Activated CD4-positive, alpha-beta memory T cell treated with anti-CD3 and anti-CD28 coated beads, Interleukin-2, amount 10 ng/mL, durations not matched to agents 7 days and 5 days (primary cell): ENCODE measurements at regions of chr3 and their contacts with region 1.

Region 1: GRCh38 chr3:56291244-56291680 is 177.0 kb downstream of the ERC2 start:
- DNase-seq: peak; percentile 26
- H3K4me3 Mint-ChIP-seq: peak overlapping the region; percentile 23
- H3K27ac Mint-ChIP-seq: peak overlapping the region; percentile 69
- H3K4me1 Mint-ChIP-seq: peaks cover 43% of the 10 kb centered on the region
- H3K27me3 Mint-ChIP-seq: peaks cover 5% of the 10 kb centered on the region

Region 2: GRCh38 chr3:56303487-56303886 is 12.2 kb after region 1 on chr3:
- CTCF ChIA-PET with region 1: interaction called, 11 read pairs
- POLR2A ChIA-PET with region 1: no interaction called
- DNase-seq: peak; percentile 20
- H3K4me3 Mint-ChIP-seq: no peak overlapping the region
- H3K27ac Mint-ChIP-seq: no peak overlapping the region
- H3K4me1 Mint-ChIP-seq: peaks cover 1% of the 10 kb centered on the region
- H3K27me3 Mint-ChIP-seq: peaks cover 2% of the 10 kb centered on the region